ENCODE measurements at regions of chr6 and their contacts with region 1.

Region 1: DNA sequence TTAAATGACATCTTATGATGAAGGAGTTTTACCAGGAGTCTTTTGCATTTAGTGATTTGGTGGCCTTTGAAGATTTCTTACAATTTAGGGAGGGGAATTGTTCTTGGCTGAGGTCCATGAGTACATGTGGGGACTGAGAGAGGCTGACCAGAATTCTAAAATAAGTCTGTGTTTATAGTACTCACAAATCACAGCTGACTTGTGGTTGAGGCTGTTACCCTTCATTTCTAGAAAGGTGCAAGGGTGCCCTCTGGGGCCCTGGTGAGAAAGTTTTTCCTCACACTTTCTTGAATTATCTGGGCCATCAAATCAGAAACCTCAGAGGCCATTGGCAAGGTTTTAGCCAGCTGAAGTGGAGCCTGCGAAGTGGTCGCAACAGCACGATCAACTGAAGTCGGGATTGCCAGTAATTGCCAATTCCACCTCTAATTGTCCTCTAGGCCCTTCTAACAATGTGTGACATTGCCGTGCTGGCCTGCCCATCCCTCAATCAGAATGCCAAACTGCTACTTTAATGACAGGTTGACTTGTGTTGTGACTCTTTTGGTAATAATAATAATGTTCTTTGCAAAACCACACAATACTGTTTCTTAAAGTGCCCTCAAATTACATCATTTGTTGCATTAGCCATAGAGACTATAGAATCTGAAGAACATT is 221.6 kb downstream of the OGFRL1 start:
- DNase-seq: peak; percentile 35
- H3K4me3 ChIP-seq: no peak overlapping the region
- H3K27me3 ChIP-seq: no peaks in the 10 kb centered on the region
- CTCF ChIP-seq: peak; percentile 73

Region 2: DNA sequence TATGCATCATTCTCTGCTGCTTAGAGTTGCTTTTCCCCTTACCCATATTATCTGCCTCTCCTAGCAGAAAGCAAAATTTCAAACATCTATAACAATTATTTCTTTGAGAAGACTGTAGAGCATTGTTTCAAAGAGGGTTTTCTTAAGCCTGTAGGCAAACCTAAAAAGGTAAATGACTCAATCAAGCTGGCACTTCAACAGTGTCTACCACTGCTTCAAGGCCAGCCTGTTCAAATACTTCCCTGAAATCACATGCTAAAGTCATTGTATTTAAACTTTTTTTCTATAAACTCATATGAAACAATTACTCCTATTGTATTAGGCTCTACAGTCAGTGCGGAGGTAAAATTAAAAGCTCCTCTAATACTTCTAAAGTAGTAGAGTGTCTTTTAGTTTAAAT is 134.5 kb before region 1 on chr6:
- CTCF ChIA-PET with region 1: interaction called, 13 read pairs
- POLR2A ChIA-PET with region 1: no interaction called
- DNase-seq: no peak
- H3K4me3 ChIP-seq: no peak overlapping the region
- H3K27me3 ChIP-seq: no peaks in the 10 kb centered on the region
- CTCF ChIP-seq: no peak

Region 3: GRCh38 chr6:71468841-71469750 is 41.1 kb before region 1 on chr6:
- CTCF ChIA-PET with region 1: interaction called, 10 read pairs
- POLR2A ChIA-PET with region 1: no interaction called
- DNase-seq: peak; percentile 89
- H3K4me3 ChIP-seq: peak overlapping the region; percentile 23
- H3K27me3 ChIP-seq: no peaks in the 10 kb centered on the region
- CTCF ChIP-seq: no peak

Region 4: GRCh38 chr6:71498643-71499042 is 11.5 kb before region 1 on chr6:
- CTCF ChIA-PET with region 1: interaction called, 13 read pairs
- POLR2A ChIA-PET with region 1: interaction called, 3 read pairs
- DNase-seq: no peak
- H3K4me3 ChIP-seq: no peak overlapping the region
- H3K27me3 ChIP-seq: no peaks in the 10 kb centered on the region
- CTCF ChIP-seq: no peak

Region 5: GRCh38 chr6:71531798-71532201 is 21.6 kb after region 1 on chr6:
- CTCF ChIA-PET with region 1: interaction called, 17 read pairs
- POLR2A ChIA-PET with region 1: no interaction called
- DNase-seq: no peak
- H3K4me3 ChIP-seq: no peak overlapping the region
- H3K27me3 ChIP-seq: no peaks in the 10 kb centered on the region
- CTCF ChIP-seq: no peak

Region 6: DNA sequence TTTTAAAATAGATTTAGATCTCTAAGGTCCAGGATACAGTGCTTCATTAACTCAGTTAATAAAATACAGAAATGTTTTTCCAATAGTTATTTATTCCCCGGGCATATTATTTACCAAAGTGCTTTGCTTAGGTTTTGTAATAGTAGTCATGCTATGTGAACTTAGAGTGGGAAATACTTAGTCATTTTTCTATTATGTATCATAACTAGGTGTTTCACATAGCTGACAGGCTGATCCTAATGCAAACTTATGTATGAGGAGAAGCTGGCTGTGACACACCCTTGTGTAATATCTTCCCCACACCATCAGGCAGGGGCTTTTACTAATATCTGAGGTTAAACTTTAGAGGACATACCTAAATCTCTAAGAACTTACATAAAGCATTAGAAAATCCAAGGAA is 98.5 kb after region 1 on chr6:
- CTCF ChIA-PET with region 1: no interaction called
- POLR2A ChIA-PET with region 1: no interaction called
- DNase-seq: no peak
- H3K4me3 ChIP-seq: no peak overlapping the region
- H3K27me3 ChIP-seq: peaks cover 4% of the 10 kb centered on the region; the same call in 1 of the 2 replicates
- CTCF ChIP-seq: no peak

Region 7: DNA sequence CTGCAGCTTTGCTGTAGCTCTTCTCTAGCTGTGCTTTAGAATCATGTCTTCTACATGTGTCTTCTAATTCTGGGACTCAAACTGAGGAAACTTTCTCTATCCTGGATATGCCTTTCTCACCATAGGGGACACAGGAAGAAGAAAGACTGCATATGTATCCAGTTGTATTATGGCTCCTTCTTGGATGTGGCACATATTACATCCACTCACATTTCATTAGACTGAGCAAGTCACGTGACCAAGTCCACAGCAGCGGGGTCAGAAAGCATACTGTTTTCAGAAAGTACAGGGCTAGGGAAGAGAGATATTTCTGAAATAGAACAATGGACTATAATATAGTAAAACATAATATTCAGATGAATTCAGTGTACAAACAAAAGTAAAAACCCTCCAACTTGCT is 188.5 kb after region 1 on chr6:
- CTCF ChIA-PET with region 1: no interaction called
- POLR2A ChIA-PET with region 1: no interaction called
- DNase-seq: no peak
- H3K4me3 ChIP-seq: no peak overlapping the region
- H3K27me3 ChIP-seq: no peaks in the 10 kb centered on the region
- CTCF ChIP-seq: no peak

Region 8: DNA sequence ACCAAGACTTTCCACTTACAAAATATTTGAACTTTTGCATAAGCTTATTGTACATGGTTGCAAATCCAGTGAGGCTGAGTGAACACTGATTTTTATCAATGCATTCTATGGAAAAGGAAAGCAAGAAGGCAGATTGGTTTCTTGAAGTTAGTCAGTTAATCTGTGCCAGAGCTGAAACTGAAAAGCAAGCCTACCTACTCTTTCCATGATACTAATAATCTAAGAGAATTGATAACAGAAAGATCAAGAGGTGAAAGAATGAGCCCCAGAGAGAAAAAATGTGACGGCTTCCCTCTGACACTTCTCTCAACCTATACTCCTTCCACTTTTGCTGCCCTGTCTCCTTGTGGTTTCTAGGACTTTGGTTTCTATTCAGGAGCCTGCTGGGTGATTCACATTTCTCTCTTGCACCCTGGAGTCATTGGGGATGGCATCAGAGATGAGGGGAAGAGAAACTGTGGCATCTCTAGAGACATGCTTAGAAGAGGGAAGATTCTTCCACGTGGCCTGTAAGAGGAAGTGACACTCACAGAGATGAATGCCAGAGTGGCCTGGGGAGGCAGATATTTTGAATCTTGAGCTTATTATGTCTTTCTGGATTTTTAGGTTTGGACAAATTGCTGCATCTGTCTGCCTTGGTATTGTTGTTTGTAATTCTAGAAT is 217.6 kb after region 1 on chr6:
- CTCF ChIA-PET with region 1: no interaction called
- POLR2A ChIA-PET with region 1: no interaction called
- DNase-seq: no peak
- H3K4me3 ChIP-seq: no peak overlapping the region
- H3K27me3 ChIP-seq: no peaks in the 10 kb centered on the region
- CTCF ChIP-seq: no peak

Measured in BJ (cell line).